CD8-positive, alpha-beta T cell (primary cell): ENCODE measurements at regions of chr20 and their contacts with region 1.

Region 1: GRCh38 chr20:3854462-3854871 is 7.8 kb downstream of the MAVS start:
- DNase-seq: no peak
- ATAC-seq: no peak
- H3K4me3 ChIP-seq: no peak overlapping the region
- H3K4me3 Mint-ChIP-seq: no peak overlapping the region
- H3K27ac ChIP-seq: no peak overlapping the region
- H3K27ac Mint-ChIP-seq: no peak overlapping the region
- H3K4me1 ChIP-seq: no peaks in the 10 kb centered on the region
- H3K4me1 Mint-ChIP-seq: peaks cover 12% of the 10 kb centered on the region
- H3K27me3 ChIP-seq: no peaks in the 10 kb centered on the region
- H3K27me3 Mint-ChIP-seq: no peaks in the 10 kb centered on the region
- CTCF ChIP-seq: no peak

Region 2: GRCh38 chr20:3716195-3716834 is 138.2 kb before region 1 on chr20:
- CTCF ChIA-PET with region 1: interaction called, 6 read pairs
- POLR2A ChIA-PET with region 1: no interaction called
- intact Hi-C with region 1: loop called in 1 of 2 experiments (anchors 1 kb)
- DNase-seq: peak in 4 of 9 experiments; percentile 15 to 50 (median 27)
- ATAC-seq: peak; percentile 36
- H3K4me3 ChIP-seq: no peak overlapping the region
- H3K4me3 Mint-ChIP-seq: no peak overlapping the region
- H3K27ac ChIP-seq: no peak overlapping the region
- H3K27ac Mint-ChIP-seq: no peak overlapping the region
- H3K4me1 ChIP-seq: no peaks in the 10 kb centered on the region
- H3K4me1 Mint-ChIP-seq: no peaks in the 10 kb centered on the region
- H3K27me3 ChIP-seq: peaks cover 0 to 5% of the 10 kb centered on the region in 2 experiments
- H3K27me3 Mint-ChIP-seq: peaks cover 13% of the 10 kb centered on the region
- CTCF ChIP-seq: peak; percentile 22

Region 3: DNA sequence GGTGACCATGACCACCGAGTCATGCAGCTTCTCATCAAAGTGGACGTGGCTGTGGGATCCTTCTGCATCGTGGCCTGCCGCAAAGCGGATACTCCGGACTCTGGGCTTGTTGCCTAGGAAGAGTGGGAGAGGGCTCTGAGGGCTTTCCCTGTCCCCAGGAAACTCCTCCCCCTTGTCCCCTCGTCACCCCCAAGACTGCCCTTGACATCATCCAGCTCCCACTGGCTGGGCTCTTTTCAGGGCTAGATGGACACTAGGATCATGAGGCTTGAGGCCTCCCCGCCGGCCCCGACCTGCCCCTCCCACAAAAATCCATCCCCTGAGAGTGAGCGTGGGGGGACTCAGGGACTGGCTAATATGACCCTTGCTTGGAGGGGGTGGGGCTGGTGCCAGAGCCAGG is 95.9 kb before region 1 on chr20:
- CTCF ChIA-PET with region 1: interaction called, 32 read pairs
- POLR2A ChIA-PET with region 1: no interaction called
- intact Hi-C with region 1: loop called in 1 of 2 experiments (anchors 1 kb)
- DNase-seq: no peak
- ATAC-seq: no peak
- H3K4me3 ChIP-seq: no peak overlapping the region
- H3K4me3 Mint-ChIP-seq: no peak overlapping the region
- H3K27ac ChIP-seq: no peak overlapping the region
- H3K27ac Mint-ChIP-seq: no peak overlapping the region
- H3K4me1 ChIP-seq: no peaks in the 10 kb centered on the region
- H3K4me1 Mint-ChIP-seq: no peaks in the 10 kb centered on the region
- H3K27me3 ChIP-seq: no peaks in the 10 kb centered on the region
- H3K27me3 Mint-ChIP-seq: no peaks in the 10 kb centered on the region
- CTCF ChIP-seq: no peak

Region 4: GRCh38 chr20:3786665-3787323 is 67.7 kb before region 1 on chr20 and contains the start of gene CENPB:
- CTCF ChIA-PET with region 1: interaction called, 66 read pairs
- POLR2A ChIA-PET with region 1: interaction called, 6 read pairs
- intact Hi-C with region 1: loop called (anchors 1 kb)
- DNase-seq: peak; percentile 83 to 95 (median 90)
- ATAC-seq: peak; percentile 87
- H3K4me3 ChIP-seq: peak within 1 kb of the TSS; percentile 46 to 55
- H3K4me3 Mint-ChIP-seq: peak within 1 kb of the TSS; percentile 84
- H3K27ac ChIP-seq: peak within 1 kb of the TSS; percentile 37 to 75
- H3K27ac Mint-ChIP-seq: peak within 1 kb of the TSS; percentile 91
- H3K4me1 ChIP-seq: peaks cover 24% of the 10 kb centered on the region
- H3K4me1 Mint-ChIP-seq: peaks cover 30% of the 10 kb centered on the region
- H3K27me3 ChIP-seq: no peaks in the 10 kb centered on the region
- H3K27me3 Mint-ChIP-seq: no peaks in the 10 kb centered on the region
- CTCF ChIP-seq: peak; percentile 86
- total RNA-seq, gene CENPB: 23.2 to 24.1 TPM

Region 5: DNA sequence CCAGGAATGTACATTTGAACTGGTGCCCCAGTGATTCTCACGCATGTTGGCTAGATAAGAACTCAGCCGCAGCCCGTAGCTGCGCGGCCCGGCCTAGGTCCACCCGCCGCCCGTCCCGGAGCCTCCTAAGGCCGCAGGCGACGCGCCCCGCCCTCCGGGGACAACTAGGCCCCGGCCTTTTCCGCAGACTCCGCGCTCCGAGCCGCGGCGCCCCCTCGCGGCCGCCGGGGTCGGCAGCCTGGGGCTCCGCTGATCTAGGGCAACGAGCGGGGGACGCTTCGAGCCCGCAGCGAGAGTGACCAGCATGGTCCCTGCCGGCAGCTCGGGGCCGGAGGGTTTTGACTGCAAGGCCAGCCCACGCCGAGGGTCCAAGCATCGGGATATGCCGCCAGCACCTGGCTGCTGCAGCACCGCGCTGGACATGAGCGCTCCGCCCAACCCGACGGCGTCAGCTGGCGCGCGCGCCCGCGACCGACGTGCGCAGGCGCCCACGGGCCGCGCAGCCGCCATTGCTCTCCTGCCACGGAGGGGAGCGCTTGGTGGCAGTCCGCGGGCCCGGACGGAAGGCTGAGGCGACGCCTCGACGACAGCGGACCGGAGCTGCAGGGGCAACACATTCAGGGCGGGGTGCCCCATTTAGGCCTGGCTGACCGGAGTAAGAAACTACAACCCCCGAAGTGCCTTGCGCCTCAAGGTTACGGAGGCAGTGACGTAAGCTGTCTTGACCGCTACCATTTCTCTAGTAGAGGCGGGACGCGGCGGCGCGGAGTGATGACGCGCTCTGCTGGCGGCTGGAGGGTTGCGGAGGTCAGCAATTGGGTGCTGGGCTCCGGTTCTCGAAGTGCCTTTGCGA is 34.2 kb before region 1 on chr20 and contains the start of gene AP5S1:
- CTCF ChIA-PET with region 1: interaction called, 45 read pairs
- POLR2A ChIA-PET with region 1: interaction called, 5 read pairs
- intact Hi-C with region 1: loop called in 1 of 2 experiments (anchors 2 kb)
- DNase-seq: peak; percentile 81 to 96 (median 89)
- ATAC-seq: peak; percentile 85
- H3K4me3 ChIP-seq: peak within 1 kb of the TSS; percentile 60 to 64
- H3K4me3 Mint-ChIP-seq: peak within 1 kb of the TSS; percentile 92
- H3K27ac ChIP-seq: peak within 1 kb of the TSS; percentile 92 to 97
- H3K27ac Mint-ChIP-seq: peak within 1 kb of the TSS; percentile 98
- H3K4me1 ChIP-seq: peaks cover 51% of the 10 kb centered on the region
- H3K4me1 Mint-ChIP-seq: peaks cover 51% of the 10 kb centered on the region
- H3K27me3 ChIP-seq: no peaks in the 10 kb centered on the region
- H3K27me3 Mint-ChIP-seq: no peaks in the 10 kb centered on the region
- CTCF ChIP-seq: peak; percentile 94
- total RNA-seq, gene AP5S1: 5.2 to 6.3 TPM

Region 6: GRCh38 chr20:3866466-3866916 is 12.0 kb after region 1 on chr20:
- CTCF ChIA-PET with region 1: interaction called, 11 read pairs
- POLR2A ChIA-PET with region 1: interaction called, 5 read pairs
- intact Hi-C with region 1: no loop called
- DNase-seq: no peak
- ATAC-seq: no peak
- H3K4me3 ChIP-seq: no peak overlapping the region
- H3K4me3 Mint-ChIP-seq: no peak overlapping the region
- H3K27ac ChIP-seq: no peak overlapping the region
- H3K27ac Mint-ChIP-seq: peak overlapping the region; percentile 60
- H3K4me1 ChIP-seq: no peaks in the 10 kb centered on the region
- H3K4me1 Mint-ChIP-seq: no peaks in the 10 kb centered on the region
- H3K27me3 ChIP-seq: no peaks in the 10 kb centered on the region
- H3K27me3 Mint-ChIP-seq: no peaks in the 10 kb centered on the region
- CTCF ChIP-seq: no peak